T-cell (primary cell): ENCODE measurements at regions of chr1 and their contacts with region 1.

Region 1: DNA sequence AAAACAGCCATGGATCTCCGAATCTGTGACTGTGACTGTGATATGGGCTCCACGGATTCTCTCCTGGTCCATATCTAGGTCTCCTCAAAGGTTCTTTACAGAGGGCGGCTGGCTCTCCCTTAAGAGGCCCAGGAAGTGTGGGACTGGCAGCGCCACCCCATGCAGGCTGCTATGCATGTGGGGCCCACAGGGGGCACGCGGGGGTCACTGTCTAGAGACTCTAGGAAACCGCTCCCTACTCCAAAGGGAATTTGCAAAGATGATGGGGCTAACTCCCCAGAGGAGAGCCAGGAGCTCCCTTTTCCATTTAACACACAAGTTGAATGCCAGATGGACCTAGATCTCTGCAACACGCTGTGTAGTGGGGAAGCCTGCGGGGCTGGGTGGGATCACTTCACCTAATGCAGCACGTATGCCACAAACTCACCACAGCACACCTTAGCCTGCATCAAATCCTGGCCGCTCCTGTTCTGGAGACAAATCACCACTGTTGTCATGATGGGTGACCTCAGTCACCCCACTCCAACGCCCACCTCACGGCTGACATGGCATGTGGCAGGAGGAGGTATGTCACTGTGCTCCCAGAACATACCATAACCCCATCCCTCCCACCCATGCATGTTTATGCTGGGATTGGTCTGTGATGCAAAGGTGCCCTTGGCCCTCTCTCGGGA is 61.7 kb downstream of the SLC45A1 start:
- DNase-seq: no peak
- ATAC-seq: no peak
- H3K4me3 ChIP-seq: no peak overlapping the region
- H3K4me3 Mint-ChIP-seq: no peak overlapping the region
- H3K27ac ChIP-seq: no peak overlapping the region
- H3K27ac Mint-ChIP-seq: peak overlapping the region in 1 of 2 donors; percentile 28
- H3K4me1 ChIP-seq: peaks cover 38 to 64% of the 10 kb centered on the region in 2 experiments
- H3K4me1 Mint-ChIP-seq: peaks cover 81 to 91% (median 87%) of the 10 kb centered on the region in 3 donors
- H3K27me3 ChIP-seq: no peaks in the 10 kb centered on the region
- H3K27me3 Mint-ChIP-seq: no peaks in the 10 kb centered on the region

Region 2: GRCh38 chr1:8443558-8444194 is 64.0 kb after region 1 on chr1:
- CTCF ChIA-PET with region 1: no interaction called
- POLR2A ChIA-PET with region 1: no interaction called
- DNase-seq: no peak
- ATAC-seq: peak in 1 of 4 experiments; percentile 19
- H3K4me3 ChIP-seq: no peak overlapping the region
- H3K4me3 Mint-ChIP-seq: no peak overlapping the region
- H3K27ac ChIP-seq: no peak overlapping the region
- H3K27ac Mint-ChIP-seq: no peak overlapping the region
- H3K4me1 ChIP-seq: peaks cover under 1 to 3% of the 10 kb centered on the region in 2 experiments
- H3K4me1 Mint-ChIP-seq: peaks cover 25 to 29% (median 25%) of the 10 kb centered on the region in 3 donors
- H3K27me3 ChIP-seq: no peaks in the 10 kb centered on the region
- H3K27me3 Mint-ChIP-seq: no peaks in the 10 kb centered on the region

Region 3: GRCh38 chr1:8777867-8778266 is 398.2 kb after region 1 on chr1:
- CTCF ChIA-PET with region 1: interaction called in 1 of 2 experiments, 11 read pairs
- POLR2A ChIA-PET with region 1: no interaction called
- DNase-seq: no peak
- ATAC-seq: no peak
- H3K4me3 ChIP-seq: no peak overlapping the region
- H3K4me3 Mint-ChIP-seq: no peak overlapping the region
- H3K27ac ChIP-seq: no peak overlapping the region
- H3K27ac Mint-ChIP-seq: no peak overlapping the region
- H3K4me1 ChIP-seq: no peaks in the 10 kb centered on the region
- H3K4me1 Mint-ChIP-seq: peaks cover 13 to 27% (median 15%) of the 10 kb centered on the region in 3 donors
- H3K27me3 ChIP-seq: no peaks in the 10 kb centered on the region
- H3K27me3 Mint-ChIP-seq: no peaks in the 10 kb centered on the region